ENCODE measurements at regions of chr21 and their contacts with region 1.

Region 1: GRCh38 chr21:42818328-42818749 is 61.0 kb downstream of the WDR4 start:
- DNase-seq: peak; percentile 29 to 50 (median 42)
- H3K4me3 ChIP-seq: no peak overlapping the region
- H3K4me3 Mint-ChIP-seq: no peak overlapping the region
- H3K27ac ChIP-seq: no peak overlapping the region
- H3K27ac Mint-ChIP-seq: no peak overlapping the region
- H3K4me1 ChIP-seq: no peaks in the 10 kb centered on the region
- H3K4me1 Mint-ChIP-seq: no peaks in the 10 kb centered on the region
- H3K27me3 ChIP-seq: no peaks in the 10 kb centered on the region
- H3K27me3 Mint-ChIP-seq: peaks cover 0 to 4% (median 2%) of the 10 kb centered on the region in 3 donors
- CTCF ChIP-seq: peak; percentile 95

Region 2: GRCh38 chr21:42593007-42593806 is 225.1 kb before region 1 on chr21:
- intact Hi-C with region 1: loop called (anchors 1 to 2 kb)
- DNase-seq: peak; percentile 16 to 29 (median 27)
- H3K4me3 ChIP-seq: no peak overlapping the region
- H3K4me3 Mint-ChIP-seq: no peak overlapping the region
- H3K27ac ChIP-seq: no peak overlapping the region
- H3K27ac Mint-ChIP-seq: no peak overlapping the region
- H3K4me1 ChIP-seq: peaks cover 0 to 6% of the 10 kb centered on the region in 2 donors
- H3K4me1 Mint-ChIP-seq: peaks cover 11% of the 10 kb centered on the region
- H3K27me3 ChIP-seq: no peaks in the 10 kb centered on the region
- H3K27me3 Mint-ChIP-seq: peaks cover 1 to 8% (median 2%) of the 10 kb centered on the region in 3 donors
- CTCF ChIP-seq: peak; percentile 76

Region 3: DNA sequence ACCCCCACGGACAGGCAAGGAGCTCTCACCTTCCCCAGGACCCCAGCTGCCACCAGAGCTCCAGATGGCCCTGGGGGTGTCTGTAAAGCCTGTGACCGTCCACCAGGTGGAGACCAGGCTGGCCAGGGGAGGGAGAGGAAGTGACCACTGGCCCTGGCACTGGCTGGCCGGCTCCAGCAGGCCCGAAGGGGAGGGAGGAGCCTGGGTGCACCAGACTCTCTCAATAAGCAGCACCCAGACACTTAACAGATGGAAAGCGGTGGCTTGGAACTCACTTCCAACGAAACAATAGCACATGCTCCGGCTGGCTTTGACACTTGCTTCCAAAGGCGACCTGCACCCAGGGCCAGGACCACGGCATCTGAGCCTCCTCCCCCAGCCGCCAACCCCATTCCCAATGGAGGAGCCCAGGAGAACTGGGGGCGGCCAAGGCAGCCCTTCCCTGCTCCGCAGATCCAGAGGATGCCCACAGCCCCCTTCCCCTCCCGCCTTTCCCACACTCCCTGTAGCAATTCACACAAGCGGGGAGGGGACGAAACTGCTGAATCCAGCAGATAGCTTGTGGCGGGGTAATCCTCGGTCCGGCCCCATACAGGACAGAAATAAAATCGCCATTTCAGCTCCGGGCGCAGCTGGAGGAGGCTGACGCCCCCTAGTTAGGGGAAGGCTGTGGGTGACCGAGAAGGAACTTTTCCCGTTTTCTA is 165.7 kb before region 1 on chr21:
- intact Hi-C with region 1: loop called (anchors 2 to 5 kb)
- DNase-seq: peak; percentile 12 to 43 (median 42)
- H3K4me3 ChIP-seq: peak overlapping the region in 1 of 3 experiments; percentile 36
- H3K4me3 Mint-ChIP-seq: peak overlapping the region; percentile 68 to 89
- H3K27ac ChIP-seq: no peak overlapping the region
- H3K27ac Mint-ChIP-seq: no peak overlapping the region
- H3K4me1 ChIP-seq: peaks cover 12 to 19% of the 10 kb centered on the region in 2 donors
- H3K4me1 Mint-ChIP-seq: peaks cover 18% of the 10 kb centered on the region
- H3K27me3 ChIP-seq: peaks cover 17 to 47% of the 10 kb centered on the region in 2 donors
- H3K27me3 Mint-ChIP-seq: peaks cover 41 to 68% (median 54%) of the 10 kb centered on the region in 3 donors
- CTCF ChIP-seq: peak; percentile 54

Region 4: GRCh38 chr21:42754270-42754933 is 63.9 kb before region 1 on chr21:
- intact Hi-C with region 1: no loop called
- DNase-seq: no peak
- H3K4me3 ChIP-seq: no peak overlapping the region
- H3K4me3 Mint-ChIP-seq: no peak overlapping the region
- H3K27ac ChIP-seq: no peak overlapping the region
- H3K27ac Mint-ChIP-seq: peak overlapping the region in 1 of 7 donors; percentile 16
- H3K4me1 ChIP-seq: no peaks in the 10 kb centered on the region
- H3K4me1 Mint-ChIP-seq: no peaks in the 10 kb centered on the region
- H3K27me3 ChIP-seq: no peaks in the 10 kb centered on the region
- H3K27me3 Mint-ChIP-seq: peaks cover 0 to 4% (median 1%) of the 10 kb centered on the region in 3 donors
- CTCF ChIP-seq: no peak